Dorsolateral prefrontal cortex (tissue), 120 donors: ENCODE measurements at regions of chr1 and their contacts with region 1.

Region 1: GRCh38 chr1:27489910-27490741 is at the start of gene WASF2:
- DNase-seq: peak; percentile 95 to 98 (median 97)
- H3K4me3 ChIP-seq: peak within 1 kb of the TSS; percentile 80 to 100 (median 99)
- H3K27ac ChIP-seq: peak within 1 kb of the TSS; percentile 95 to 100 (median 99)
- H3K27me3 ChIP-seq: no peaks in the 10 kb centered on the region
- CTCF ChIP-seq: peak in 21 of 56 donors; percentile 5 to 42 (median 22)
- total RNA-seq, gene WASF2: 36.2 to 128 (median 63.6) TPM

Region 2: GRCh38 chr1:27416387-27417111 is 73.6 kb before region 1 on chr1:
- intact Hi-C with region 1: loop called (anchors 2 to 5 kb)
- DNase-seq: peak in 1 of 10 donors; percentile 55
- H3K4me3 ChIP-seq: no peak overlapping the region
- H3K27ac ChIP-seq: peak overlapping the region in 45 of 59 donors; percentile 7 to 97 (median 89)
- H3K27me3 ChIP-seq: no peaks in the 10 kb centered on the region
- CTCF ChIP-seq: peak in 54 of 56 donors; percentile 33 to 79 (median 65)

Region 3: GRCh38 chr1:27436204-27437159 is 53.6 kb before region 1 on chr1:
- intact Hi-C with region 1: loop called in 1 of 2 experiments (anchors 5 kb)
- DNase-seq: no peak
- H3K4me3 ChIP-seq: peak overlapping the region in 20 of 59 donors; percentile 1 to 29 (median 9)
- H3K27ac ChIP-seq: peak overlapping the region in 56 of 59 donors; percentile 13 to 93 (median 68)
- H3K27me3 ChIP-seq: no peaks in the 10 kb centered on the region
- CTCF ChIP-seq: no peak

Region 4: DNA sequence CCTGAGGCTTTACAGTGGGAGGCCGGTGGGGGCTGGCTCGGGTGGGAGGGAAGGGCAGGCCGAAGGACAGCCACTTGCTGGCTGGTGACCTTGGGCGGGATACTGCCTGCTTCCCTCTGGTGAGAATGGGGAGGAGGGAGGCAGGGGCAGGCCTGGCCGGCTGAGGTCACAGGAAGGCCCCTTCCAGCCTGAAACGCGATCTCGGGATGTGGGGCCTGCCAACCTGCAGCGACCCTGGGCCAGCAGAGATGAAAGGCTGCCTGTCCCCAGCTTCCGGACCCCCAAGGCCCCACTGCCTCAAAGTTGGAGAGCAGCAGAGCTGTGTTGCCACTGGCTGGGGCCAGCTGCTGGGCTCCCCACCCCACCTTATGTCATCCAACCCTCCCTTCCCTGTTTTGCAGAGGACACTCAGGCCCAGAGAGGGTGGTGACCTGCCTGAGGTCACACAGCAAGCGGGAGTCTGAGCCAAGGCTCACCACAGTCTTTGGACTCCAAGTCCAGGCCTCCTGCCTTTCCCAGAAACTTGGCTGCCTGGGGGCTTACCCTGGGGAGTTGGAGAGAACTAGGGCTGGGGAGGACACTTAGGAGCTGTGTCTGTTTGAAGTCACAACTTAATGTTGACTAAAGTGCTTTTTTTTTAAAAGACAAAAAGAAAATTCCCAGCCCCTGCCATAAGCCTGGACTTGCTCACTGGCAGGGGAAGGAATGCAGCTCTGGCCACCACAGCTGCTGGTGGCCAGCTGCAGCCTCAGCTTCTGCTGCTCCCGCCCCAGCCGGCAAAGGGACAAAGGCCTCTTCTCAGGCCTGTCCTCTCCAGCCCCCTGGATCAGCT is 14.7 kb after region 1 on chr1:
- intact Hi-C with region 1: loop called in 1 of 2 experiments (anchors 2 kb)
- DNase-seq: peak in 9 of 10 donors; percentile 81 to 96 (median 93)
- H3K4me3 ChIP-seq: peak overlapping the region in 18 of 59 donors; percentile 4 to 33 (median 12)
- H3K27ac ChIP-seq: peak overlapping the region; percentile 86 to 100 (median 99)
- H3K27me3 ChIP-seq: no peaks in the 10 kb centered on the region
- CTCF ChIP-seq: peak in 9 of 56 donors; percentile 4 to 32 (median 27)

Region 5: GRCh38 chr1:27525296-27526272 is 35.5 kb after region 1 on chr1:
- intact Hi-C with region 1: loop called in 1 of 2 experiments (anchors 2 kb)
- DNase-seq: peak in 1 of 10 donors; percentile 49
- H3K4me3 ChIP-seq: peak overlapping the region in 57 of 59 donors; percentile 4 to 72 (median 39)
- H3K27ac ChIP-seq: peak overlapping the region in 58 of 59 donors; percentile 33 to 97 (median 88)
- H3K27me3 ChIP-seq: no peaks in the 10 kb centered on the region
- CTCF ChIP-seq: no peak

Region 6: GRCh38 chr1:27643701-27644625 is 153.8 kb after region 1 on chr1:
- intact Hi-C with region 1: no loop called
- DNase-seq: no peak
- H3K4me3 ChIP-seq: no peak overlapping the region
- H3K27ac ChIP-seq: no peak overlapping the region
- H3K27me3 ChIP-seq: no peaks in the 10 kb centered on the region
- CTCF ChIP-seq: peak in 54 of 56 donors; percentile 23 to 67 (median 52)